CD4-positive, alpha-beta T cell (primary cell): ENCODE measurements at regions of chr2 and their contacts with region 1.

Region 1: DNA sequence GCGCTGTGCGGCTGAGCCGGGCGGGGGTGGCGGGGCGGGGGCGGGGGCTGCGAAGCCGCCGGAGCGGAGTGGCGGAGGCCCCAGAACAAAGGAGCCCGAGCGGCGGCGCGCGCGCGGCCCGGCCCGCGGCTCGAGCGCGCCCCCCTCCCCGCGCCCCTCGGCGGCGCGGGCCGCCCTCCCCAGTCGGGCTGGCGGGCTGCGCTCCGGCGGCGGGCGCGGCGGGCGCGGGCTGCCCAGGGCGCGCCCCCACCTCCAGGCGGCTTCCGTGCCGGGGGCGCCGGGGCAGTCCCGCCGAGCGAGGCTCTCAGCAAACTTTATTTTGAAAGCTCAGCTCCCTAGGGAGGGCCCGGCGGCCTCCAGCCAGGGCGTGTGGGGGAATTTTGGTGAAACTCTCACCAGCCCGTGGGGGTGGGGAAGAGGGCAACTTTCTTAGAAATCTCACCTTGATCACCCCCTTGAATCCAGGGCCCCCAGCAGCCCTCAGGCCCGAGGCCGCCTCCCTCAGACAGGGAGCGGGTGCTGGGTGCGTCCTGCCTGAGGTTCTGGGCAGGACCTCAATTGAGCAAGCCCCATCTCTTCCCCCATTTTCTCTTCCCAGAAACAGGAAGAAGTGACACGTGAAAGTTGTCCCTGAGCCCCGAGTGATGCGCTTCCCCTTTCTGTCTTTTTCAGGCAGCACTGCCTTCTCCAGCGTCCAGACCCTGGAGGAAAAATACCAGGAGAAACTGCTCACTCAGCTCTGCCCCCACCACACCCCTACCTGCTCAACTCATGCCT is 786 bp downstream of the TET3 start:
- DNase-seq: peak in 10 of 14 experiments; percentile 21 to 84 (median 38)
- ATAC-seq: peak; percentile 39
- H3K4me3 ChIP-seq: peak overlapping the region; percentile 80
- H3K4me3 Mint-ChIP-seq: peak overlapping the region; percentile 84
- H3K27ac ChIP-seq: peak overlapping the region; percentile 64 to 71
- H3K27ac Mint-ChIP-seq: peak overlapping the region; percentile 81
- H3K4me1 ChIP-seq: peaks cover 72% of the 10 kb centered on the region
- H3K4me1 Mint-ChIP-seq: peaks cover 80% of the 10 kb centered on the region
- H3K27me3 ChIP-seq: no peaks in the 10 kb centered on the region
- H3K27me3 Mint-ChIP-seq: no peaks in the 10 kb centered on the region
- CTCF ChIP-seq: no peak

Region 2: DNA sequence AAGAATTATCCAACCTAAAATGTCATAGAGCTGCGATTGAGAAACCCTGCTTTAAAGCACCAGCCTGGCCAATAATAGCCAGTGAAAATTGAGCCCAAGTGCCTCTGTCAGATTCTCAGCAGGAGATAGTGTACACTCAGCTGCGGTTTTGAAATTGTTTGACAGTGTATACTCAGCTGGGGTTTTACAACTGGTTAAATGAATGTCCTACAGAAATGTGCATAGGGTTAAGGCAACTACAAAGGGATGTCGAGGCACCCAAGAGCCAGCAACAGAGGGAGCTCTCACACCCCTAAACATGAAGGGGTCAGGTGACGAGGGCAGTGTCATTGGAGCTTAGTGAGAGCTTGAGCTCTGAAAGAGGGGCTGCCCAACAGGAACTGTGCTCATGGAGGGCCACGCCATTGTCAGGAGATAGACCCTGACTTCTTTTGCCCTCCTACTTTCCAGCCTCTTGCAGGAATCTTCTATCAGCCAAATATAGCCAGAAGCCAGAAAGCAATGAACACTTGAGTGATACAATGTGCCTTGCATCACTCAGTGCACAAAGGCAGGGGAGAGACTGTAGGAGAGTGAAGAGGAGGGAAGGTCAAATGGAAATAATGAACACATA is 77.5 kb before region 1 on chr2:
- CTCF ChIA-PET with region 1: interaction called, 13 read pairs
- POLR2A ChIA-PET with region 1: interaction called, 6 read pairs
- intact Hi-C with region 1: loop called in 1 of 2 experiments (anchors 2 kb)
- DNase-seq: peak; percentile 30 to 79 (median 47)
- ATAC-seq: peak; percentile 82
- H3K4me3 ChIP-seq: no peak overlapping the region
- H3K4me3 Mint-ChIP-seq: no peak overlapping the region
- H3K27ac ChIP-seq: no peak overlapping the region
- H3K27ac Mint-ChIP-seq: no peak overlapping the region
- H3K4me1 ChIP-seq: no peaks in the 10 kb centered on the region
- H3K4me1 Mint-ChIP-seq: no peaks in the 10 kb centered on the region
- H3K27me3 ChIP-seq: no peaks in the 10 kb centered on the region
- H3K27me3 Mint-ChIP-seq: no peaks in the 10 kb centered on the region
- CTCF ChIP-seq: peak; percentile 61

Region 3: GRCh38 chr2:73939419-73939818 is 46.1 kb before region 1 on chr2:
- CTCF ChIA-PET with region 1: interaction called, 7 read pairs
- POLR2A ChIA-PET with region 1: interaction called, 3 read pairs
- intact Hi-C with region 1: loop called in 1 of 2 experiments (anchors 1 kb)
- DNase-seq: peak in 9 of 14 experiments; percentile 3 to 64 (median 38)
- ATAC-seq: peak; percentile 81
- H3K4me3 ChIP-seq: no peak overlapping the region
- H3K4me3 Mint-ChIP-seq: peak overlapping the region; percentile 11
- H3K27ac ChIP-seq: no peak overlapping the region
- H3K27ac Mint-ChIP-seq: peak overlapping the region; percentile 77
- H3K4me1 ChIP-seq: peaks cover 19% of the 10 kb centered on the region
- H3K4me1 Mint-ChIP-seq: peaks cover 77% of the 10 kb centered on the region
- H3K27me3 ChIP-seq: no peaks in the 10 kb centered on the region
- H3K27me3 Mint-ChIP-seq: no peaks in the 10 kb centered on the region
- CTCF ChIP-seq: peak; percentile 21

Region 4: GRCh38 chr2:73970850-73971471 is 14.5 kb before region 1 on chr2:
- CTCF ChIA-PET with region 1: interaction called, 5 read pairs
- POLR2A ChIA-PET with region 1: interaction called, 36 read pairs
- intact Hi-C with region 1: loop called in 1 of 2 experiments (anchors 2 kb)
- DNase-seq: peak; percentile 23 to 89 (median 53)
- ATAC-seq: peak; percentile 84
- H3K4me3 ChIP-seq: peak overlapping the region; percentile 31
- H3K4me3 Mint-ChIP-seq: peak overlapping the region; percentile 70
- H3K27ac ChIP-seq: peak overlapping the region; percentile 60 to 65
- H3K27ac Mint-ChIP-seq: peak overlapping the region; percentile 96
- H3K4me1 ChIP-seq: peaks cover 45% of the 10 kb centered on the region
- H3K4me1 Mint-ChIP-seq: peaks cover 78% of the 10 kb centered on the region
- H3K27me3 ChIP-seq: no peaks in the 10 kb centered on the region
- H3K27me3 Mint-ChIP-seq: no peaks in the 10 kb centered on the region
- CTCF ChIP-seq: no peak

Region 5: GRCh38 chr2:74031221-74031620 is 45.7 kb after region 1 on chr2:
- CTCF ChIA-PET with region 1: interaction called, 3 read pairs
- POLR2A ChIA-PET with region 1: interaction called, 16 read pairs
- intact Hi-C with region 1: loop called in 1 of 2 experiments (anchors 5 kb)
- DNase-seq: no peak
- ATAC-seq: no peak
- H3K4me3 ChIP-seq: no peak overlapping the region
- H3K4me3 Mint-ChIP-seq: peak overlapping the region; percentile 77
- H3K27ac ChIP-seq: peak overlapping the region in 1 of 2 donors; percentile 15
- H3K27ac Mint-ChIP-seq: peak overlapping the region; percentile 79
- H3K4me1 ChIP-seq: peaks cover 40% of the 10 kb centered on the region
- H3K4me1 Mint-ChIP-seq: peaks cover 81% of the 10 kb centered on the region
- H3K27me3 ChIP-seq: no peaks in the 10 kb centered on the region
- H3K27me3 Mint-ChIP-seq: no peaks in the 10 kb centered on the region
- CTCF ChIP-seq: no peak